Right ventricle myocardium inferior (tissue), 1 donor: ENCODE measurements at regions of chr12 and their contacts with region 1.

Region 1: GRCh38 chr12:14905269-14906004 is 19.8 kb upstream of the MGP start:
- DNase-seq: peak; percentile 74
- ATAC-seq: peak; percentile 65

Region 2: GRCh38 chr12:14948672-14949071 is 43.2 kb after region 1 on chr12:
- intact Hi-C with region 1: loop called (anchors 1 kb)
- DNase-seq: no peak
- ATAC-seq: peak; percentile 84

Region 3: DNA sequence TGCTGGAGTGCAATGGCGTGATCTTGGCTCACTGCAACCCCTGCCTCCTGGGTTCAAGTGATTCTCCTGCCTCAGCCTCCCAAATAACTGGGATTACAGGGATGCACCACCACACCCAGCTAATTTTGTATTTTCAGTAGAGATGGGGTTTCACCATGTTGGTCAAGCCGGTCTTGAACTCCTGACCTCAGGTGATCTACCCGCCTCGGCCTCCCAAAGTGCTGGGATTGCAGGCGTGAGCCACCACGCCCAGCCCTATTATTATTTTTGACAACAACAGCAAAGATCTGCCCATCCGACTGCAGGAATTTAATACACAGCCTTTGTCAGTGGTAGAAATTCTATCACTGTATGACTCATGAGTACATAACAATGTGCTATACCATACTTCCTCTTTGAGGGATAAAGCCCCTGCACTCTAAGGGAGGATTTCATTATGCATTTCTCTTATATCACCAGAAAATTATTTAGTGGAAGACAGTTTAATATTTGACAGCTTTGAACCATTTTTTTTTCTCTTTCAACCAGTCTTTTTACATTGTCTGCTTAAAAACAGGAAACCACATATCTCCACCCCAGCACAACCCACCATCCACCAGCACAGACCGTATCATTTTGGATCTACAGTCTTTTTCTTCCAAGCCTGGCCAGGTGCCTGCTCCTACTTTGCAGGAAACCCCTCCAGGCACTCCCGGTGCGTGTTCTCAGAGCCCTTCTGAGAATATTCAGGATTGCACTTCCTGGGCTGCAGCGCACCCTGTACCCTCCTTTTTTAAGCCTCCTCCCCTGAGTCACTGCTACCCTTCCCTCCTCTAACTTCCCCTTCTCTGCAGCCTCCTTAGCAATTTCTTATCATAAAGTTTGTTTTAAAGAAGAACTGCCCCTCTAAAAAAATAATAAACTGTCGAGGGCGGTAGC is 55.4 kb after region 1 on chr12:
- intact Hi-C with region 1: loop called (anchors 5 kb)
- DNase-seq: peak; percentile 74
- ATAC-seq: peak; percentile 75